Prostate gland (tissue), 2 donors: ENCODE measurements at regions of chr2 and their contacts with region 1.

Region 1: DNA sequence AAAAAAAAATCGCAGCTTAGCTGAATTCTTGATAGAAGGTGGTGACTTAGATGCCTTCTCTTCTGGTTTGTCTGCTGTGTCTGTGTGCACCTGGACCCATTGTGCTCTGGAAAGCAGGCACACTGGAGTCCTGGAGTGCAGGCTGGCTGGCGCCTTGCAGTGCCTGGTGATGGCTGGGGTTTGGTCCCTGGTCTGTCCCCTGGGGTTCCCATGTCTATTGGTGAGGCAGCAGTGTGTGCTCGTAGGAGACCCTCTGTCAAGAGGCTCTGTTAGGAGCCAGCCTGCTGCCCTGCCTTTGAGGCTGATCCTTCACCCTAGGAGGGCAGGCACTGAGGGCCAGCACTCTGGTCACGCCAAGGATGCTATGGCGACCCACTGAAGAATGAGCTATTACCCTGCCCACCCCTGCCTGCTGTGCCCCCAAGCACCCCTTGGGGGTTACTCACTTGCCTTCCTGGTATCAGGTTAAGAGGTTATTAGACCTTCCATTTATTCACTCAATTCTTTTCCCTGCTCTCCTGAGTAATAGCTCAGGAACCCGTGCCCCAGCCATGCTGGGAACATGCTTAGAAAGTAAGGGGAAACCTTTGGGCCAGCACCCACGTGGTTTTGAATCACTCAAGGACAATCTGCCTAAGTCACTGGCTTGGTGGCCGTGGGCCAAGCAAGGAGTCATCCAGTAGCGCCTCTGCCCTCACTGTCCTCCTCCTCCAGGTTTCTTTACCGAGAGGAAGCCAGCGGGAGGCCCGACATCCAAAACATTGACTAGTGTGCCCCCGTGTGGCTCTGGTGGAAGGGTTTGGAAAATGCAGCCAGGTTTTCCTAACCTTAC is 284.5 kb downstream of the PRKCE start:
- DNase-seq: peak; percentile 91
- H3K4me3 ChIP-seq: no peak overlapping the region
- H3K27ac ChIP-seq: peak overlapping the region in 1 of 2 donors; percentile 20
- H3K4me1 ChIP-seq: peaks cover 3% of the 10 kb centered on the region
- H3K27me3 ChIP-seq: no peaks in the 10 kb centered on the region
- CTCF ChIP-seq: peak; percentile 35 to 92 (median 81)
- POLR2A ChIP-seq: no peak

Region 2: DNA sequence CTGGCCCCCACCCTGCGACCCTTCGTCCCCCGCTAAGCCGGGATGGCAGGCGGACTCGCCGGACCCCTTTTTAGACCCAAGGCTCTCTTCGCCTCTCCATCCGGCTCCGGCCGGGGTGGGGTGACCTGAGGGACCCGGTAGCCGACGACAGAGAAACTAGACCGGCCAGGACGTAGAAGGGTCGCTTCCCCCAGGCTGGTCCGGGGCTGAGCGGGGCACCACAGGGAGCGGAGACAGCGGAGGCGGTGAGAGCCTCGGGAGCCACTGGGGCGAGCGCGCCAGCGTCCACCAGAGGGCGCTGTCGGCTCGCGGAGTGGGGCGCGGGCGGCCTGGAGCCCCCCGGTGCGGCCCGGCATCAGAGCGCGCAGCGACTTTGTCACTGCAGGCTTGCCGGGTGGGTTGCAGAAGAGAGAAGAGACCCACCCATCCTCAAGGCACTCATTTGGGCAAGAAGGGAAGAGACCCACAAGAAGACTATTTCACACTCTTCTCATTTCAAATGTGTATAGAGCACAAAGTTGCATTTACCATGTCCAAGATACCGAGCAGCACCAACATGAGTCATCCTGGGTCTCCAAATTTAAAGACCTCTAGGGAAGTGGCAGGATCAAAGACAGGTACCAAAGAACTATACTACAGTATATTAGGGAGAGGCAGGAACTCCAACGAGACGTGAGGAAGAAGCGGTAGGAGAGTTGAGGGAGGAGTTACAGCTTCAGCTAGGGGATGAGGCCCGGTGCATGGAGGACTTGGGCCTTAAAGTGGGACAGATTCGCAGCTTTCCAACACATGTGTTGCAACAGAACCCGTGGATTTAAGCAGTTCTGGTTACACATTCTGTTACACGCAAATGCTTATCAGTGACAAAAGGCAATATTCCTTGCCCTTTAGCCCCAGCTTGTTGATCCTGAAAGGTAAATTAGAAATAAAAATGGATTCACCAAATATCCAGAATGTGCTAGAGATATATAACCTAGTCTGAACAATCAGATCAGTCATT is 292.2 kb before region 1 on chr2:
- intact Hi-C with region 1: loop called (anchors 1 kb)
- DNase-seq: peak; percentile 32
- H3K4me3 ChIP-seq: peak overlapping the region; percentile 39 to 41
- H3K27ac ChIP-seq: no peak overlapping the region
- H3K4me1 ChIP-seq: no peaks in the 10 kb centered on the region
- H3K27me3 ChIP-seq: no peaks in the 10 kb centered on the region
- CTCF ChIP-seq: peak; percentile 93 to 99 (median 98)
- POLR2A ChIP-seq: no peak

Region 3: DNA sequence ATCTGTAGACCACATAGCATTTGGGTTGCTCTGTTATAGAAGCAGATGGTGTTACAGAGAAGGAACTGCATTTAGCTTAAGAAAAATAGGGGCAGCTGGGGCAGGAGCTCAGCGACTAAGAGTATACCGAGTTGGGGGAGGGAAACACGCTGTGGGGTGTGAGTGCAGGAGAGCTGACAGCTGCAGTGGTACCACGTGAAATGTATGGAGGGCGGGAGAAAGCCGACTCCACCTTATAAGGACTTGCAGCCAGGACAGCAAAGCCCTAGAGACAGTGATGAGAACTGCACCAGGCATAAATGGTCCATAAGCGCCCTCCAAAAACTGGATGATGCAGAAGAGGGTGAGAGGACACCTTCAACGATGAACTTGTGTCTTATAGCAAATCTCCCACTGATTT is 47.0 kb before region 1 on chr2:
- intact Hi-C with region 1: loop called (anchors 5 kb)
- DNase-seq: no peak
- H3K4me3 ChIP-seq: no peak overlapping the region
- H3K27ac ChIP-seq: no peak overlapping the region
- H3K4me1 ChIP-seq: peaks cover 5% of the 10 kb centered on the region
- H3K27me3 ChIP-seq: no peaks in the 10 kb centered on the region
- CTCF ChIP-seq: no peak
- POLR2A ChIP-seq: no peak

Region 4: DNA sequence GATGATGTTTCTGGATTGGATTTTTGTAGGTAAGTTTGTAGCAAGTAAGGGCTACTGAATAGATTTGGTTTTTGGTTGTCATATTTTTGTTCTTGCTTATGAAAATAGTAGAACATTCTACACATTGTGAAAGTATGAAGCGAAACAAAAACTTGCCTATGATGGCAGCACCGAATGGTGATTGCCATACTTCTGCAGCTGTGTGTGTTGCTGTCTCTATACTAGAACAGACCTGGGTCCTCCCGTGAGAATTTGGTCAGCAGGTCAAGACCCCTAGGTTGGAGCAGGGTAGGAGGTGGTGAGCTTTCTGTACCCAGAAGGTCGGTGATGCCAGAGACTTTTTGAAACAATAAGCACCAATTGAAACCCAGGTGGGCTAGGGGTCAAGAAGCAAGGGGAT is 38.0 kb after region 1 on chr2:
- intact Hi-C with region 1: no loop called
- DNase-seq: no peak
- H3K4me3 ChIP-seq: no peak overlapping the region
- H3K27ac ChIP-seq: no peak overlapping the region
- H3K4me1 ChIP-seq: no peaks in the 10 kb centered on the region
- H3K27me3 ChIP-seq: no peaks in the 10 kb centered on the region
- CTCF ChIP-seq: no peak
- POLR2A ChIP-seq: no peak